ENCODE measurements at regions of chr1 and their contacts with region 1.

Region 1: GRCh38 chr1:236269439-236269838 is 12.3 kb downstream of the ERO1B start:
- DNase-seq: no peak
- H3K4me3 ChIP-seq: no peak overlapping the region
- H3K27ac ChIP-seq: no peak overlapping the region
- H3K4me1 ChIP-seq: no peaks in the 10 kb centered on the region
- H3K27me3 ChIP-seq: no peaks in the 10 kb centered on the region
- CTCF ChIP-seq: no peak

Region 2: GRCh38 chr1:236103646-236104218 is 165.7 kb before region 1 on chr1:
- CTCF ChIA-PET with region 1: no interaction called
- dilution Hi-C with region 1: no loop called
- in situ Hi-C with region 1: no loop called
- intact Hi-C with region 1: no loop called
- DNase-seq: peak; percentile 29
- H3K4me3 ChIP-seq: no peak overlapping the region
- H3K27ac ChIP-seq: no peak overlapping the region
- H3K4me1 ChIP-seq: no peaks in the 10 kb centered on the region
- H3K27me3 ChIP-seq: no peaks in the 10 kb centered on the region
- CTCF ChIP-seq: peak; percentile 71 to 79

Region 3: GRCh38 chr1:236222632-236223031 is 46.8 kb before region 1 on chr1:
- CTCF ChIA-PET with region 1: no interaction called
- dilution Hi-C with region 1: loop called (anchors 5 kb)
- in situ Hi-C with region 1: no loop called
- intact Hi-C with region 1: no loop called
- DNase-seq: no peak
- H3K4me3 ChIP-seq: no peak overlapping the region
- H3K27ac ChIP-seq: no peak overlapping the region
- H3K4me1 ChIP-seq: no peaks in the 10 kb centered on the region
- H3K27me3 ChIP-seq: no peaks in the 10 kb centered on the region
- CTCF ChIP-seq: no peak

Region 4: GRCh38 chr1:236332092-236332758 is 62.8 kb after region 1 on chr1:
- CTCF ChIA-PET with region 1: no interaction called
- dilution Hi-C with region 1: no loop called
- in situ Hi-C with region 1: no loop called
- intact Hi-C with region 1: no loop called
- DNase-seq: no peak
- H3K4me3 ChIP-seq: no peak overlapping the region
- H3K27ac ChIP-seq: no peak overlapping the region
- H3K4me1 ChIP-seq: no peaks in the 10 kb centered on the region
- H3K27me3 ChIP-seq: no peaks in the 10 kb centered on the region
- CTCF ChIP-seq: no peak

Measured in mammary epithelial cell (primary cell).